Endothelial cell of umbilical vein (primary cell): ENCODE measurements at regions of chr11 and their contacts with region 1.

Region 1: GRCh38 chr11:116513894-116514293 is 258.9 kb downstream of the BUD13 start:
- DNase-seq: peak; percentile 78
- H3K4me3 ChIP-seq: no peak overlapping the region
- H3K27ac ChIP-seq: no peak overlapping the region
- H3K4me1 ChIP-seq: no peaks in the 10 kb centered on the region
- H3K27me3 ChIP-seq: peaks cover 0 to 5% of the 10 kb centered on the region in 2 experiments
- CTCF ChIP-seq: peak; percentile 43 to 71
- POLR2A ChIP-seq: no peak

Region 2: DNA sequence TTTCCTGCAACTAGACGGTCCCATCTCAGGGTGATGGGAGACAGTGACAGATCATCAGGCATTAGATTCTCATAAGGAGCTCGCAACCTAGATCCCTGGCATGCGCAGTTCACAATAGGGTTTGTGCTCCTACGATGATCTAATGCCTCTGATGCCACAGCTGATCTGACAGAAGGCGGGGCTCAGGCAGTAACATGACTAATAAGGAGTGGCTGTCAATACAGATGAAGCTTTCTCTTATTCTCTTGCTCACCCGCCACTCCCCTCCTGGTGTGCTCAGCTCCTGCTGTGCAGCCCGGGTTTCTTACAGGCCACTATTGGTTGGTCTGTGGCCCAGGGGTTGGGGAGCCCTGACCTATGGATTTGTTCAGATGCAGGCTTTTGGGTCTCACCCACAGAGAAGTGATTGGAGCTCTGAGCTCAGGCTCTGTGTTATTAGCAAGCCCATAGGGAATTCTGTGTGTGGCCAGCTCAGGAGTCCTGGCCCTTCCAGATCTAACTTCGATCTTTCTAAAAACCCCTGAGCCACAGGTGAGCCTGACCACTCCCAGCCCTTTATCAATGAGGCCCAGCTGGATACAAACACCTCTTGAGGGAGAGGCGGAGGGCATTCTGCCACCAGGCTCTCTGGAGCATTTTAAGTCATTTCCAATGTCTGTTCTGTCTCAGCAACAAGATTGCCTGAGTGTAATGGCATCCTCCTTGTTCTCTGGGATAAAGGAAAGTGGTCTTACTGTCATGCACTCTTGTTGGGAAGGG is 92.9 kb before region 1 on chr11:
- CTCF ChIA-PET with region 1: no interaction called
- POLR2A ChIA-PET with region 1: no interaction called
- dilution Hi-C with region 1: no loop called
- intact Hi-C with region 1: no loop called
- DNase-seq: no peak
- H3K4me3 ChIP-seq: no peak overlapping the region
- H3K27ac ChIP-seq: no peak overlapping the region
- H3K4me1 ChIP-seq: no peaks in the 10 kb centered on the region
- H3K27me3 ChIP-seq: no peaks in the 10 kb centered on the region
- CTCF ChIP-seq: no peak
- POLR2A ChIP-seq: no peak

Region 3: GRCh38 chr11:116445108-116446047 is 68.5 kb before region 1 on chr11:
- CTCF ChIA-PET with region 1: no interaction called
- POLR2A ChIA-PET with region 1: no interaction called
- dilution Hi-C with region 1: no loop called
- intact Hi-C with region 1: no loop called
- DNase-seq: no peak
- H3K4me3 ChIP-seq: no peak overlapping the region
- H3K27ac ChIP-seq: no peak overlapping the region
- H3K4me1 ChIP-seq: no peaks in the 10 kb centered on the region
- H3K27me3 ChIP-seq: peaks cover 2 to 3% of the 10 kb centered on the region in 2 experiments
- CTCF ChIP-seq: no peak
- POLR2A ChIP-seq: no peak

Region 4: DNA sequence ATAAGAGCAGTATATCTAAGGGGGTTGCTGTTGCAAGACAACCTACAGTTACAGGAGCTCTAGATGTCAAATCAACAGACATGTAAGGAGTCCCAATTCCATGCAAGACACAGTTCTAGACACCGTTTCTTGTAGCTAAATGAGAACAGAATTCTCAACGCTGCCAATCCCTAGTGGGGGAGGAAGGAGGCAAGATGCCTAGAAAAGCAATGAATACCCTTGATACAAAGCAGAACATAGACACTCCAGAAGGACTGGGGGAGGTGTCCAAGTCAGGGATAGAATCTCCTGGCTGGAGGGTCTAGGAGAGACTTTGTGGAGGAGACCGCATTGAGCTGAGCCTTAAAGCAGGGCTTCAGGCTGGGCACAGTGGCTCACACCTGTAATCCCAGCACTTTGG is 21.3 kb before region 1 on chr11:
- CTCF ChIA-PET with region 1: no interaction called
- POLR2A ChIA-PET with region 1: no interaction called
- dilution Hi-C with region 1: no loop called
- intact Hi-C with region 1: no loop called
- DNase-seq: no peak
- H3K4me3 ChIP-seq: no peak overlapping the region
- H3K27ac ChIP-seq: no peak overlapping the region
- H3K4me1 ChIP-seq: no peaks in the 10 kb centered on the region
- H3K27me3 ChIP-seq: peaks cover 5 to 8% of the 10 kb centered on the region in 2 experiments
- CTCF ChIP-seq: no peak
- POLR2A ChIP-seq: no peak

Region 5: DNA sequence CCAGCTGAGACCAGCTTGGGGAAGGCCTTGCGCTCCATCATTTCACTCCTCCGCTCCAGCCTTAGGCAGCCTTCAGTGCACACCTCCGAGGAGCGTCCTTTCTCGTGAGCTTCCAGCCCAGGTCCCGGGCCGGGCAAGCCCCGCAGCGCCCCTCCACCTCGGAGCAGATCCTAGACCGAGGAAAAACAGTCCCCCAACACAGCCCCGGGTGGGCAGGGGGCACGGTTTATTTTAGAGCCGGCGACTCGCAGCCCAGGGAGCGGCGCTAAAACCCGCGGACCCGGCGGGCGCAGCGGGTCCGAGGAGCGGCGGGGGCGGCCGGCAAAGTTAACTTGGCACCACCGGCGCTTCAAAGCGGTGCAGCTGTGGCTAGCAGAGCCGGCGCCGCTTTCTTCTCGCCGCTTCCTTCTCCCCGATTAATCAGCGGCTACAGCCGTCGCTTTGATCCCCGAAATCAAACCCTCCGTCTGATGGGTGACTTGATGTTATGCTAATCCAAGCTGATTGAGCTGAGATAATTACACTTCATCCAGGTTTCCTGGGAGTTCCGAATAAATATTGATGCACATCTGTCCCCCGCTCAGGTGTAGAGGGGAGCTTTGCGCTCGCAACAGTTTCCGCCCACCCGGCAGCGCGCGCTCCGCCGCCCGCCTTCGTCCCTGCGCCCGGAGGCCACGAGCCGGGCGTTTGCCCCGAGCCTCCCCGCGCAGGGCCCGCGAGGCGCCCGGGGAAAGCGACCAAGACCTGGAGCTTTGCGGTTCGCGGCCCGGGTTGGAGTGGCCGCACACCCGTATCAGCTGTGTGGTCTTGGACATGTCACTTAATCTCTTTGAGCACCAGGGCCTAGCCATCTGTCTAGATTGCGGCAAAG is 66.2 kb after region 1 on chr11:
- CTCF ChIA-PET with region 1: interaction called, 14 read pairs
- POLR2A ChIA-PET with region 1: no interaction called
- dilution Hi-C with region 1: no loop called
- intact Hi-C with region 1: no loop called
- DNase-seq: no peak
- H3K4me3 ChIP-seq: peak overlapping the region in 1 of 3 experiments; percentile 23
- H3K27ac ChIP-seq: no peak overlapping the region
- H3K4me1 ChIP-seq: peaks cover 3% of the 10 kb centered on the region
- H3K27me3 ChIP-seq: peaks cover 61 to 63% of the 10 kb centered on the region in 2 experiments
- CTCF ChIP-seq: no peak
- POLR2A ChIP-seq: no peak

Region 6: DNA sequence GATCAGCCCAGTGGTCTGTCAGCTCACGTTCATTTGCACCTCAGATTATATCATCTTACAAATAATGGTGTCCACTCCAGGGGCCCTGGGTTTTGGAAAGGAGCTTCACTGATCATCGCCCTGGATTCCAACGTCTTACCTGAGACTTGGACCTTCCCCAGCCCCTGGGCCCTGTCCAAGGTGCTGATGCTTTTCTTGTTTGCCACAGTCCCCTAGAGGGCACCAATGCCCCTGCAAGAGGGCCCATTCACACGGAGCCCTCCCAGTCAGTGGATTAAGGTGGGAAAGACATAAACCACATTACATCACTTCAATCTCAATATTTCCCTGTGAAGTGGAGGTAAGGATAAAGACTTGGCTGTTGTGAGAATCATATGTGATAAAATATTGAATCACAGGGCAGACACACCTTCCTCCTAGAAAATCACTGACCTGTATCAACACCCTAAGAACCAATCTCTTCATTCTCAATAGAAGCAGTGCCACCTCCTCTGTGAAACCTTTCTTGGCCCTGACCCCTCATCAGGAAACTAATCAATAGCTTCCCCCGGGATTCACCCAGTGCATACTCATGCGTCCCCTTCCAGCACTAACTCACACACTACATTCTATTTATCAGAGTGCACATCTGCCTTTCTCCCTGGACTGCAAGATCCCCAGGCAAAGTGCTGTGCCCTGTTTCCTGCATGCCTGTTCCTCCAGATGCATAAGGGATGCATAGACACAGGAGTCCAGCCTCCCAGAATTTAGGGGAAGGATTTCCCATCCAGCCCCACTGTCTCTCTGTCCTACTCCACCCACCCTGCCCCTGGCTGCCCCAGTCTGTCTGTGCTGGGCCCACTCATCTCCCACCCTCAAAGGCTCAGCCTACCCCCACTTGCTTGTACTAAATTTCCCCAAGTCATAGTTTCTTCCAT is 91.9 kb after region 1 on chr11:
- CTCF ChIA-PET with region 1: interaction called, 8 read pairs
- POLR2A ChIA-PET with region 1: no interaction called
- dilution Hi-C with region 1: no loop called
- intact Hi-C with region 1: loop called (anchors 1 kb)
- DNase-seq: peak; percentile 60
- H3K4me3 ChIP-seq: no peak overlapping the region
- H3K27ac ChIP-seq: no peak overlapping the region
- H3K4me1 ChIP-seq: peaks cover 15% of the 10 kb centered on the region
- H3K27me3 ChIP-seq: no peaks in the 10 kb centered on the region
- CTCF ChIP-seq: peak; percentile 57 to 70
- POLR2A ChIP-seq: no peak

Region 7: GRCh38 chr11:116641561-116642045 is 127.7 kb after region 1 on chr11:
- CTCF ChIA-PET with region 1: interaction called, 350 read pairs
- POLR2A ChIA-PET with region 1: interaction called, 5 read pairs
- dilution Hi-C with region 1: no loop called
- intact Hi-C with region 1: loop called (anchors 1 kb)
- DNase-seq: peak; percentile 29
- H3K4me3 ChIP-seq: no peak overlapping the region
- H3K27ac ChIP-seq: no peak overlapping the region
- H3K4me1 ChIP-seq: no peaks in the 10 kb centered on the region
- H3K27me3 ChIP-seq: no peaks in the 10 kb centered on the region
- CTCF ChIP-seq: peak; percentile 73 to 86
- POLR2A ChIP-seq: no peak

Region 8: DNA sequence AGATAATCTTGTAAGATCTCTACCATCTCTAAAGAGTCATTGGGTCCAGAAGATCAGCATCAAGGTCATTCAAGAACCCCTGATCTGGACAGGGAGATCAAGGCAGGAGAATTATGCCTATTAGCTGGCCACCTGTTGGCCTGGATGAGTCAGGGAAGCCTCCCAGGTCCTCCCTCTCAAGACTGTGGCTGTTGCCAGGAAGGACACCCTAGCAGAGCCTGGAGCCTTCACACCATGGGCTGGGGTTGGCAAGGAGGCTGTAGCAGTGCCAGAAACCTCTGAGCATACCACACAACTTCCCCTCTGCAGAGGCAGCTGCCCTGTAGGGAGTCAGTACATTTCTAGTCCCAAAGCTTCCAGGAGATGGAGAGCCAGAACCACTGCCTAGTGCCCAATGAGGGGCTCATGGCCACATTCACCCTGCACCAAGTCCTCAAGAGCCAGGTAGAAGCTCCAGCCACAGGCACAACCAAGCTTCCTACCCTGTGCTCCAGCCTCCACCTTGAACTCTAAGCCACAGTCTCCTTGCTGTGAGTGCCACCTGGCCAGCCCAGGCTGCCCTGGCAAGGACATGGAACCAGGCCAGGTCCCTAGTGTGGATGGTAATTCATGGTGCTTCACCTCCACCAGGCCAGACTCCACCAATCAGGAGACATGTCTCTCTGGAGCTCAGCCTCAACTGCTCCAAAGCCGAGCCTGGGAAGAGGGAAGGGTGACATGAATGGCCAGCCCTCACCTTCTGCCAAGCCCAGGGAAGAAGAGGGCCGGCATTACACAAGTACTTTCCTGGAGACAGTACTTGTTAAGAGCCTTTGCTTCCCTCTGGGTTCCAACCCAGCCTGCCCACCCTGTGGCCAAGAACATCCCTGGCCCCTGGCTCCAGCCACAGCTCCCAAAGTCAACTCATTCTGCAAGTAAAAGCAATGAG is 134.6 kb after region 1 on chr11:
- CTCF ChIA-PET with region 1: interaction called, 350 read pairs
- POLR2A ChIA-PET with region 1: no interaction called
- dilution Hi-C with region 1: no loop called
- intact Hi-C with region 1: no loop called
- DNase-seq: no peak
- H3K4me3 ChIP-seq: no peak overlapping the region
- H3K27ac ChIP-seq: no peak overlapping the region
- H3K4me1 ChIP-seq: no peaks in the 10 kb centered on the region
- H3K27me3 ChIP-seq: peaks cover 0 to 3% of the 10 kb centered on the region in 2 experiments
- CTCF ChIP-seq: no peak
- POLR2A ChIP-seq: no peak